ENCODE measurements at regions of chr10 and their contacts with region 1.

Region 1: GRCh38 chr10:3785257-3785850 is 345 bp upstream of the KLF6 start:
- DNase-seq: peak; percentile 99
- ATAC-seq: peak; percentile 85

Region 2: DNA sequence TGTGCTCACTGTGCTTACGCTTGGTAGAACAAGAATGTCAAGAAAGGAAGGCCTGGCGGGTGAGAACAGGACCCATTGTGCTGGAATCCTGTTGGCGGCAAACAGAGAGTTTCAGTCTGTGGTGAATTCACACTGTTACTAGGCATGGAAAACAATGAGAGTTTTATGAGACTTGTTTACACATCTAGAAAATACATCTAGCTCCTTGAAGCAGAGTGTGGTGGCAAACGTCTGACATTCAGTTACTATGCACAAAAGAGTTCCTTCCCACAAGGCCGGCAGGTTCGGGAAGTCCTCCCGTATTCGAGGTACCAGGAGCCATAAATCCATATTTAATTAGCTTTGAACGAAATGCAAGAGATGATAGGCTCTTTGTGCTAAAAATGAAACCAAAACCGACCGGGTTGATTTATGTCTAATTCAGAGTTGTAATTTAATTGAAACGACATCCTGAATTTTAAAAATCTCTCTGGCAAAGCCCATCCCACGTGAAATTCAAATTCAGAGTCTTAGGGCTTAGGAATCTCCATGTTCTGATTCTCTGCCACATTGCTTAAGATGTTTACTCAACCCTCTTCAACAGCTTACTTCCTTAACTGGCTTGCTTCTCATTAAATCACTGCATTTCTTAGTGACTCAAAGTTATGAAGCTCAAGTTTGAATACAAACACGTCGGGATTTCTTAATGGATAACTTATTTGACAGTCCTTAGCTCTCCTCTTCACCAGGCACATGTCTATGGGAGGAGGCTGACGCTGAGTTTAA is 312.9 kb before region 1 on chr10:
- intact Hi-C with region 1: loop called (anchors 2 kb)
- DNase-seq: no peak
- ATAC-seq: no peak

Region 3: GRCh38 chr10:3714531-3714930 is 70.8 kb before region 1 on chr10:
- intact Hi-C with region 1: no loop called
- DNase-seq: no peak
- ATAC-seq: no peak

Region 4: GRCh38 chr10:3887885-3888476 is 102.6 kb after region 1 on chr10:
- intact Hi-C with region 1: loop called (anchors 10 kb)
- DNase-seq: no peak
- ATAC-seq: no peak

Region 5: GRCh38 chr10:4067531-4067930 is 282.2 kb after region 1 on chr10:
- intact Hi-C with region 1: no loop called
- DNase-seq: no peak
- ATAC-seq: no peak

Region 6: DNA sequence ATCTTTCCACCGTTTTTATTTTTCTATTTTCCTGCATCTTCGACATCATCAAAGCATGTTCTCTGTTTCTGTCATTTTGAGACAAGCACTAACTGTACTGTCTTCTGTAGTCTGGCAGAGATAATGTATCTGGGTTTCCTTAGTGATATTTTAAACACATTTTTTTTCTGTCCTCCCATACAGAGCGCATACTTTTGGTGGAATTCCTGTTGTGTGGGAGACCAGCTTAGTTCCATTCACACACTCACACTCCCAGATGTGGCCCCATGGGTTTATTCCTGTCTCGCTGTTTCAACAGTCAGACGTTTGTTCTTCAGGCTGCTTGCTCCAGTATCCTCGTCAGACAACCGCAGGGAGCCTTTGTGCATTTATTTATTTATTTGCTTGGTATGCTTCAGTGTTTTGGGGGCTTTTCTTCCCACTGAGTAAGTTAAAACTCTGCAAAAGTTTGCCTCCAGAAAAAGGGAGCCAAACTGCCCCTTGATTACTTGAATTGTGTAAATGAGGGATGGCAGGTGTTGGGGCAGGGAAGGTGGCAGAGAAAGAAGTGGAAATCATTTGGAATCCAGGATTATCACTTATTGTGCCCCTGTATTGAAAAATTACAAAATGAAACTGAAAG is 456.5 kb after region 1 on chr10:
- intact Hi-C with region 1: loop called (anchors 1 kb)
- DNase-seq: no peak
- ATAC-seq: peak; percentile 89

Region 7: DNA sequence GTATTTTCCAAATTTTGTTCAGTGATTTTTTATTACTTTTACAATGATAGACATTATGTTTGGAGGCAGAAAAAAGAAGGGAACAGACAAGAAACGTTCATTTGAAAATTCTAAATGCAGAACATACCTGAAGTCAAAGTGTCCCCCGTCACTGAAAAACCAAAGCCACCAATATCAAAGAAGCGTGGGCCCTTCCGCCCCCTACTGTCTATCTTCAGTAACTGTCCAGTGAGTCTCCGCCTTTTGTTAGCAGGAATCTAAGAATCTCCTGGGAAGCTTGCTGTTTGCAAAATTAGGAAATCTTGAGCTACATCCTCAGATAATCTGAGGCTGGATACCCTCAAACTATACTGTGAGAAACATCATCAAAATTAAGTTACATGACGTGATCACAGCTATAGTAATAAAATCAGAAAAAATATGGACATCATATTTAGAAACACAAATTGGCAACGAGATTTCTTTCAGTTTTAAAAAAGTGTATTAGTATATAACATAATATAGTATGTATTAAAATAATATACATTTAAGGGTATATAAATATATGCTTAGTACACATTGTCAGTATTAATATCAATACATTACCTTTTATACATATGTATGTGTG is 871.3 kb after region 1 on chr10:
- intact Hi-C with region 1: loop called (anchors 2 kb)
- DNase-seq: peak; percentile 68
- ATAC-seq: no peak